Naive thymus-derived CD4-positive, alpha-beta T cell (primary cell): ENCODE measurements at regions of chr6 and their contacts with region 1.

Region 1: DNA sequence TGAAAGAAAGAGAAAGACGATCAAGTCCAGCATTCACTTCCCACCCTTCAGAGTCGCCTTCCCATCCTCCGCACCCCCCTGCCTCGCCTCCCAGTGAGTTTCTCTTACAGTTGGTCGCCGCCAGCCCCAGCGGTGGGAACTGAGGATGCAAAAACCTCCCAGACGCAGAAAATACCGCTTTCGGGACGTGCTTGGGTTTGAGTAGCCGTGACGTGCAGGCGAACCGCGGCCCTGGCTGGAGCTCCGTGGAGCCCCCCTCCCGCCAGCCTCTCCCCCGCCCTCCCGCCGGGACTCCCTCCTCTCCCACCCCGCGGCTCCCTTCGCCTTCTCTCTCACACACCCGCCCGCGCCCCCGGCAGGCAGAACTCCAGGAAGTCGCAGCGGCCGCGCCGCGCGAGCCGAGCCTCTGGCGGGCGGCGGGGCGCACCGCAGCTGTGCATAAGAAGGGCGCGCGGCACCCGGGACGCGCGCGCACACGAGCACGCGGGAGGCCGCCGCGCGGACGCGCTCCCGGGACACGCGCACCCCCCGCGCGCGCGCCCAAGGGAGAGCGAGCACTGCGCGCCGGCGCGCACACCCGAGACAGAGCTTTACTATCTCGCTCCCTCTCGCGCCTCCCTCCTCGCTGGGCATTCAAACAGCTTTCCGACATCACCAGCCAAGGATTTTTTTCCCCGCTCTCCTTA is at the start of gene ADGRB3:
- DNase-seq: peak in 4 of 9 donors; percentile 9 to 44 (median 14)
- ATAC-seq: peak; percentile 87
- H3K4me3 ChIP-seq: peak within 1 kb of the TSS; percentile 27
- H3K4me3 Mint-ChIP-seq: peak within 1 kb of the TSS; percentile 67 to 86 (median 80)
- H3K27ac ChIP-seq: no peak within 1 kb of the TSS
- H3K27ac Mint-ChIP-seq: no peak within 1 kb of the TSS
- H3K4me1 ChIP-seq: no peaks in the 10 kb centered on the region
- H3K4me1 Mint-ChIP-seq: peaks cover 12 to 28% (median 23%) of the 10 kb centered on the region in 7 donors
- H3K27me3 ChIP-seq: peaks cover 0 to 5% of the 10 kb centered on the region in 2 donors
- H3K27me3 Mint-ChIP-seq: peaks cover 52 to 57% (median 54%) of the 10 kb centered on the region in 5 donors
- total RNA-seq, gene ADGRB3: not detected

Region 2: DNA sequence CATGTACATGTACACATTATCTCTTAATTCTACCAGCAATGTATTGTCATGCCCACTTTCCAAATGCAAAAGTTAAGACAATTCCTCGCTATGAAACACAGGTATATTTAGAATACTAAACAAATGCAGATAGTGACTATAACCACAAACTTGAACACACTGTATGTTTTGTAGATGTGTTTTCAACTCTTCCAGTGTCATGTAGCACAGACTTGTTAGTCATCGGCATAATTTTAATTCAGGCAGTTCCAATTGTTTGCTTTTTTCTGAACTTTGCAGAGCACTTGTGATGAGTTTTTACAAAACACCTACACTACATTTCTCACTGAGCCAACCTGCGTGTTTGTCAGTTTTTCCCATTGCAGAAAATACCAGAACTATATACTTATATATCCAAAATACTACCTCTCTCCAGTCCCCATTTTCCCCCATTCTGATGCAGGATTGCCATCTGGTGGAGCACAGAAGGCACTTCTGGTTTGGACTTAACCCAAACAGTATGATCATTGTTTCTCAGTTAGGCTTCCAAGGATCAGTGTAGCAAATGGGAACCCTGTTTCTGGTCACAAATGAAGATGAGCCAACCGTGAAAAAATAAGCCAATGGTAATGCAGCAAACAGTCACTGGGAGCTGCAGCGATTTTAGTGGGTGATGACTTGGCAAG is 143.6 kb after region 1 on chr6:
- CTCF ChIA-PET with region 1: no interaction called
- POLR2A ChIA-PET with region 1: no interaction called
- intact Hi-C with region 1: loop called (anchors 2 to 5 kb)
- DNase-seq: no peak
- ATAC-seq: no peak
- H3K4me3 ChIP-seq: no peak overlapping the region
- H3K4me3 Mint-ChIP-seq: no peak overlapping the region
- H3K27ac ChIP-seq: no peak overlapping the region
- H3K27ac Mint-ChIP-seq: no peak overlapping the region
- H3K4me1 ChIP-seq: no peaks in the 10 kb centered on the region
- H3K4me1 Mint-ChIP-seq: no peaks in the 10 kb centered on the region
- H3K27me3 ChIP-seq: no peaks in the 10 kb centered on the region
- H3K27me3 Mint-ChIP-seq: peaks cover 0 to 4% (median 0%) of the 10 kb centered on the region in 5 donors

Region 3: GRCh38 chr6:68967549-68968300 is 332.9 kb after region 1 on chr6:
- CTCF ChIA-PET with region 1: no interaction called
- POLR2A ChIA-PET with region 1: no interaction called
- intact Hi-C with region 1: loop called in 1 of 2 experiments (anchors 1 kb)
- DNase-seq: peak; percentile 8 to 55 (median 32)
- ATAC-seq: peak; percentile 80
- H3K4me3 ChIP-seq: no peak overlapping the region
- H3K4me3 Mint-ChIP-seq: no peak overlapping the region
- H3K27ac ChIP-seq: no peak overlapping the region
- H3K27ac Mint-ChIP-seq: no peak overlapping the region
- H3K4me1 ChIP-seq: no peaks in the 10 kb centered on the region
- H3K4me1 Mint-ChIP-seq: peaks cover 0 to 4% (median 0%) of the 10 kb centered on the region in 7 donors
- H3K27me3 ChIP-seq: no peaks in the 10 kb centered on the region
- H3K27me3 Mint-ChIP-seq: peaks cover 0 to 9% (median 3%) of the 10 kb centered on the region in 5 donors

Region 4: DNA sequence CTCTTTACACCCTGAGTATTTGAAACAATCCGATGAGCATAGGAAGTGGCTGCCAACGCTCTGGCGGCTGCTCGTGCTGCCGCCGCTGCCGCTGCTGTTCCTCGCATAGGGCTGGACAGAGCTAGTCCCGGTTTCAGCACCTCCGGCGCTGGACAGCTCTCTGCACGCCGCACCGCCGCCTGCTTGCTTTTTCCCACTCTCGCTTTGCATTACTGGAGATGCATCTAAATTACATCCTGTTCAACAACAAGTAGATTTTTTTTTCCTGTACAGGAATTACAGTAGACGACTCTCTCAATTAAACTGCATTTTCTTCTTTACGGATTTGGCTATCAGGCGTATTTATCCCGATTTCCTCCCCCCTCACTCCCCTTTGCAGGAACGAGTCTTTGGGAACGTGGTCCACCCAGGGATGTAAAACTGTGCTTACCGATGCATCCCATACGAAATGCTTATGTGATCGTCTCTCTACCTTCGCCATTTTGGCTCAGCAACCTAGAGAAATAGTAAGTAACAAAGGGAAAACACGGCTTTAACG is 598.1 kb after region 1 on chr6:
- CTCF ChIA-PET with region 1: no interaction called
- POLR2A ChIA-PET with region 1: no interaction called
- intact Hi-C with region 1: loop called in 1 of 2 experiments (anchors 5 kb)
- DNase-seq: peak in 5 of 9 donors; percentile 2 to 66 (median 7)
- ATAC-seq: peak; percentile 38
- H3K4me3 ChIP-seq: no peak overlapping the region
- H3K4me3 Mint-ChIP-seq: no peak overlapping the region
- H3K27ac ChIP-seq: no peak overlapping the region
- H3K27ac Mint-ChIP-seq: no peak overlapping the region
- H3K4me1 ChIP-seq: no peaks in the 10 kb centered on the region
- H3K4me1 Mint-ChIP-seq: no peaks in the 10 kb centered on the region
- H3K27me3 ChIP-seq: no peaks in the 10 kb centered on the region
- H3K27me3 Mint-ChIP-seq: peaks cover 0 to 13% (median 0%) of the 10 kb centered on the region in 5 donors

Region 5: GRCh38 chr6:69719602-69720193 is 1084.8 kb after region 1 on chr6:
- CTCF ChIA-PET with region 1: no interaction called
- POLR2A ChIA-PET with region 1: no interaction called
- intact Hi-C with region 1: loop called in 1 of 2 experiments (anchors 10 kb)
- DNase-seq: no peak
- ATAC-seq: no peak
- H3K4me3 ChIP-seq: no peak overlapping the region
- H3K4me3 Mint-ChIP-seq: no peak overlapping the region
- H3K27ac ChIP-seq: no peak overlapping the region
- H3K27ac Mint-ChIP-seq: no peak overlapping the region
- H3K4me1 ChIP-seq: no peaks in the 10 kb centered on the region
- H3K4me1 Mint-ChIP-seq: peaks cover 0 to 27% (median 11%) of the 10 kb centered on the region in 7 donors
- H3K27me3 ChIP-seq: no peaks in the 10 kb centered on the region
- H3K27me3 Mint-ChIP-seq: no peaks in the 10 kb centered on the region

Region 6: DNA sequence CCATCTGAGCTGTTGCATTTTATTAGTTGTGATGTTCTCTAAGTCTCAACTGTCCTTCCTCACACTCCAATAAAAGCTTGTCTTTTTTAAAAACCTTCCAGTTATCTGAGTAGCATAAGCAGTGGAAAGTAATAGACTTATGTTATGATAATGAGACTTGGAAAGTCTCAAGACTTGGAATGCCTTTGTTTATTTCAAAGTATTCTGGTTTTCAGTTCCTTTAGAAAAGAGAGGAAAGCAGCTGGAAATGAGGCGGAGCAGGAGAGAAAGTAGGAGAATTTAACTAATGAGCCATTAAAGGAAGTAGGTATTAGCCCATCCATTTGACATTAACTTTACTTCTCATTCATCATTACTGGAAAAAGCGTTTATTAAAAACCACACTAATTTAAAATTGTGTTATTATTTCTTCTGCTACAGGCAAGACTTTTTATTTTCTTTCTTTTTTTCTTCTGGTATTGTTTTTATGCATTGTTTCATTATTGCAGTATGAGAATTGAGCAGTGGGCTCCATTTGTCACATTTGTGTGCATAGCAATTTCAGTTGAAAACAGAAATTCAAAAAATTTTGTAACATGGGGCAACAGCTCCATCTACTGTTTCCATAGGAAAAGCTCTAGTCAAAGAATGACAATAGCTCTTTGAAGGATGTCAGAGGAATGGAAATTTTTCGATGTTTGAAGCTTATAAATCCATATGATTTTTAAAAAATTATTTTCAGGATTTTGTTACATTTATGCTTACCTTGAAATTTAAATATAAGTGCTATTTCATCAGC is 1473.2 kb after region 1 on chr6:
- CTCF ChIA-PET with region 1: no interaction called
- POLR2A ChIA-PET with region 1: no interaction called
- intact Hi-C with region 1: loop called in 1 of 2 experiments (anchors 2 kb)
- DNase-seq: peak in 6 of 9 donors; percentile 4 to 43 (median 17)
- ATAC-seq: no peak
- H3K4me3 ChIP-seq: no peak overlapping the region
- H3K4me3 Mint-ChIP-seq: no peak overlapping the region
- H3K27ac ChIP-seq: no peak overlapping the region
- H3K27ac Mint-ChIP-seq: no peak overlapping the region
- H3K4me1 ChIP-seq: no peaks in the 10 kb centered on the region
- H3K4me1 Mint-ChIP-seq: no peaks in the 10 kb centered on the region
- H3K27me3 ChIP-seq: no peaks in the 10 kb centered on the region
- H3K27me3 Mint-ChIP-seq: peaks cover 0 to 21% (median 14%) of the 10 kb centered on the region in 5 donors